Activated CD4-positive, alpha-beta T cell treated with anti-CD3 and anti-CD28 coated beads, Interleukin-2, amount 10 ng/mL, durations not matched to agents 24 days and 14 days (primary cell): ENCODE measurements at regions of chr7 and their contacts with region 1.

Region 1: DNA sequence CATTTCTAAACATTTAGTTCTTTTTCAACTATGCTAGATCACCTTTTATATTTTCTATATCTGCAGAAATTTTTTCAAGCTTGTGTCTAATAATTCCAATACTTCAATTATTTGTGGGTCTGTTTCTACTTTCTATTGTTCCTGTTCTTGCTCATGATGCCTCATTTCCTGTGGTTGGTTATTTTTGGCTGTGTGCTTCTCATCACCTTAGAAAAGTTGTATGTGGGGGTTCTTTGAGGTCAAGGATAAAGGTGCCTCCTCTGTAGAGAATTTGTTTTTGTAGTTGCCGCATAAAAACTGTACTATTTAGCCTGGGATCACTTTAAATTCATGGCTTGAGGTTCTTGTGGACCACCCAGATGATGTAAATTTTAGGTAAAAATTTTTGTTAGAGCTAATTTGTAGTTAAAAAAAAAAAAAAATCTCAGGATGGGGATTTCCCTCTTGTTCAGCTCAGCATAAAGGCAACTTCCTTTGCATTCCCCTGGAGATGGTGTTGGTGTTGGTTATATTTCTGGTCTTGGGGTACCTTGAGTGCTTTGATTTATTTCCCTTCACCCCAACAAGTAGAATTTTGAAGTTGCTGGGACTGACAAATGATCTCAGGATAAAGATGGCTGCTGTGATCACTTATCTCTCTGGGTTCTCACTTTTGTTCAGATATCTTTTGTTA is 27.0 kb upstream of the JAZF1 start:
- DNase-seq: peak; percentile 53
- H3K4me3 Mint-ChIP-seq: no peak overlapping the region
- H3K27ac Mint-ChIP-seq: no peak overlapping the region
- H3K4me1 Mint-ChIP-seq: peaks cover 15% of the 10 kb centered on the region
- H3K27me3 Mint-ChIP-seq: peaks cover 7% of the 10 kb centered on the region

Region 2: DNA sequence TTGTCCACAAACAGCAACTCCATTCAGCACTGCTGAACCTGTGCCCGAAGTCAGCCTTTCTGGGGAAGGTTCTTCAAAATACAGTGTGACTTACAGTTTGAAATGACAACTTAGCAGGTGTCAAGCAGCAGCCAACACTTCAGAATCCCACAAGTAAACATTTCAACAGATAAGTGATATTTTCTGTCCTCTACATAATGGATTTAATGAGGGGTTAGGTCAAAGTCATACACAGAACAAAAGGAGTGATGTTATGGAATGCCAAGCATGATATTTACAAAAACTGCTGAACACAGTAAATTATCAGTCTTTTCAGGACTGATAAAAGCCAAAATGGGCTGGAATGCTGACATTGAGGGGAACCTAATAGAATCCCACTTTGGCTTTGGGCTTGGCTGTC is 50.6 kb after region 1 on chr7:
- intact Hi-C with region 1: loop called (anchors 1 kb)
- DNase-seq: no peak
- H3K4me3 Mint-ChIP-seq: no peak overlapping the region
- H3K27ac Mint-ChIP-seq: no peak overlapping the region
- H3K4me1 Mint-ChIP-seq: no peaks in the 10 kb centered on the region
- H3K27me3 Mint-ChIP-seq: peaks cover 26% of the 10 kb centered on the region